Left cardiac atrium (tissue), 4 donors: ENCODE measurements at regions of chr4 and their contacts with region 1.

Region 1: GRCh38 chr4:122151982-122152710 is at the start of gene BLTP1:
- DNase-seq: peak; percentile 93
- ATAC-seq: peak; percentile 100
- total RNA-seq, gene BLTP1: 39.3 to 46.2 TPM

Region 2: DNA sequence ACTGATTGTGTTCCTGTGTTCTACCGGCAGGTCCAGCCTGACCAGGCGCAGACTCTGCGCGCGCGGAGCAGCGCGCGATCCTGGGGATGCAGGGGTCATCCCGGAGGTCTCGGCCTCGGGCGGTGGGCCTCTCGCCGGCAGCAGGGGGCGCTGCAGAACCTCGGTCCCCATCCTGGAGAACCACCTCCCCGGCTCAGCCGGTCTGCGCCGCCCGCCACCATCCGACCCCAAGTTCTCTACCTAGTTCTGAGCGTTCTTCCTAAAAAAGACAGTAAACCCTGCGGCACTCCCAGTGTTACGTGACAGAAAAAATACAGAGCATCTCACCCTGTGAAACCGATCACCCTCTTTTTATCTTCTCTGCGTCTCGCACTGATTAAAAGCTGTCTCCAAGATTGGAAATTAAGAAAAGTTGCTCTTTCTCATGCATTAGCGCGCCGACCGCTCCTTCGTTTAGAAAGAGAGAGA is 201.9 kb before region 1 on chr4:
- intact Hi-C with region 1: loop called in 1 of 2 experiments (anchors 5 kb)
- DNase-seq: peak; percentile 83
- ATAC-seq: peak; percentile 92 to 95

Region 3: GRCh38 chr4:122003335-122003734 is 148.8 kb before region 1 on chr4:
- intact Hi-C with region 1: loop called in 1 of 2 experiments (anchors 5 kb)
- DNase-seq: no peak
- ATAC-seq: no peak